ENCODE measurements at regions of chr7 and their contacts with region 1.

Region 1: GRCh38 chr7:140810830-140811556 is 113.7 kb downstream of the BRAF start:
- DNase-seq: peak; percentile 10
- H3K4me3 ChIP-seq: no peak overlapping the region
- CTCF ChIP-seq: peak; percentile 59

Region 2: DNA sequence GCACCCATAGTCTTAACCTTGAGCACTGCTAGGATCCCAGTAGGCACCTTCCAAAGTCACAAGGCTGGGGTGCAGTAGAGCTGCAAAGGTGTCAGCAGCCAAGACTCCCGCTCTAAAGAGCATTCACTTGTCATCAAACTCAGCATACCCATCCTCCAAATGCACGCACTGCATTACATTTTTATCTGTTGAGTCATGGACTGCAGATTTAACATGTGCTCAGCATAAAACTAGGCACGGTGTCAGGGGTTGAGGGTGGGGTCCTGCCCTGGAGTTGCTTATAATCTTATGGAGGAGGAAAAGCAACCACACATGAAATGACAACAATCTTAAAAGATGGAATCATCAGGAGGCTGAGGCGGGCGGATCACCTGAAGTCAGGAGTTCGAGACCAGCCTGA is 850.8 kb before region 1 on chr7:
- CTCF ChIA-PET with region 1: no interaction called
- POLR2A ChIA-PET with region 1: no interaction called
- DNase-seq: no peak
- H3K4me3 ChIP-seq: no peak overlapping the region
- CTCF ChIP-seq: no peak

Region 3: GRCh38 chr7:140738280-140738679 is 72.7 kb before region 1 on chr7:
- CTCF ChIA-PET with region 1: no interaction called
- POLR2A ChIA-PET with region 1: no interaction called
- DNase-seq: peak; percentile 28
- H3K4me3 ChIP-seq: no peak overlapping the region
- CTCF ChIP-seq: no peak

Region 4: DNA sequence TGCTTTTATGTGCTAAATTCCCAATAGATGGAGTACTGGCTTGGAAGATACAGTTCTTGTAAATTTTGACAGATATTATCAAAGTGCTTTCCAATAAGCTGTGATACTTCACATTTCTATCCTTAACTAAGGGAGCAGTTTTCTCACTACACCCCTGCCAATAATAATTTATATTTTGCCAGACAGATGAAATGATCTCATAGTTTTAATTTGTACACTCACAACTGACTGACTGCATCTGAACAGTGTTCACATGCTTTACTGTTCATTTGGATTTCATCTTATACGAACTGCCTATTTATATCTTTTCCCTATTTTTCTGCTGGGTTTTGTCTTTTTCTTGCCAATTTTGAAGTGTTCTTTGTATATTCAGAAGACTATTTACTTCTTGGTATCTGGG is 17.7 kb after region 1 on chr7:
- CTCF ChIA-PET with region 1: interaction called, 18 read pairs
- POLR2A ChIA-PET with region 1: no interaction called
- DNase-seq: no peak
- H3K4me3 ChIP-seq: no peak overlapping the region
- CTCF ChIP-seq: no peak

Region 5: GRCh38 chr7:140857048-140857447 is 46.1 kb after region 1 on chr7:
- CTCF ChIA-PET with region 1: interaction called, 11 read pairs
- POLR2A ChIA-PET with region 1: no interaction called
- DNase-seq: no peak
- H3K4me3 ChIP-seq: no peak overlapping the region
- CTCF ChIP-seq: no peak

Region 6: GRCh38 chr7:140924019-140924820 is 113.2 kb after region 1 on chr7:
- CTCF ChIA-PET with region 1: interaction called, 16 read pairs
- POLR2A ChIA-PET with region 1: no interaction called
- DNase-seq: no peak
- H3K4me3 ChIP-seq: peak overlapping the region; percentile 82
- CTCF ChIP-seq: peak; percentile 61

Region 7: DNA sequence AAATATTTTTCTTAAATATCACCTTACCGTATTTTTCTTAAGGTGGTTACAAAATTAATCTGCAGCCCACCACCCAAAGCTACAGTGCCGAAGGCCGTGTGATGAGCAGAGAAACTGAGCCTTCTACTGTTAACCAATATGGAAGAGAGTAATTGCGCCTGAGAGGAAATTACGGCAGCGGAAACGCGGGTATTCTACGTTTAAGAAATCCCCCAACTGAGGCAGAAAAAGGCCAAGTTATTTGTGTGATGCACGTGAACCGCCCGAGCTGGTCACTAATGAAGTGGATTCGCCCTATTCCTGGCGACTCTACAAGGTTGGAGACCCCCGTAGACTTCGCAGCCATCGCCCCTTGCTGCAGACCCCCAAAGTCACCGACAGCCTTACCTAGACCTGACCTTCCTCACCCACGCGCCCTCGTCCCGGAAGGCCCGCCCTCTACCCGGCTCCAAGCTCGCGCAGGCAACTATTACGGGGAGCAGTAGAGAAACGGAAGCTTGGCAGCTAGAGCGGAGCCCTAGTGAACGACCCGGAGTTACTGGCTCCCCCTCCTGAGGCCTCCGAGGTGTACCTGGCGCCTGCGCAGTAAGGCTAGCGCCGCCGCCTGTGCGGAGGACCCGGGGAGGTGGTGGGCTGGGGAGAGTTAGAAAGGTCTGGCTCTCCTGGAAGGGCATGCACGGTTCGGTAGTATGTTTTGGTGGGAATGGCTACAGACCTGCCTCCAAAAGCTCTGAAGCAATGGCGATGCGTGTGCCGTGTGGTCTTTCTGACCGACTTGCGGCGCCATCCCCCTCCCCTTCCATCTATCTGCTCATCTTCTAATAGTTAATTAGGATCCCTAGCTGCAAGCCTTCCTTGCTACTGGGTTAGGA is 203.8 kb after region 1 on chr7 and contains the start of gene MRPS33:
- CTCF ChIA-PET with region 1: interaction called, 124 read pairs
- POLR2A ChIA-PET with region 1: no interaction called
- DNase-seq: peak; percentile 79
- H3K4me3 ChIP-seq: peak within 1 kb of the TSS; percentile 85
- CTCF ChIP-seq: peak; percentile 87

Region 8: GRCh38 chr7:141533149-141533949 is 722.4 kb after region 1 on chr7:
- CTCF ChIA-PET with region 1: interaction called, 27 read pairs
- POLR2A ChIA-PET with region 1: no interaction called
- DNase-seq: peak; percentile 24
- H3K4me3 ChIP-seq: no peak overlapping the region
- CTCF ChIP-seq: peak; percentile 87

Region 9: GRCh38 chr7:141654551-141654950 is 843.6 kb after region 1 on chr7:
- CTCF ChIA-PET with region 1: interaction called, 30 read pairs
- POLR2A ChIA-PET with region 1: no interaction called
- DNase-seq: peak; percentile 16
- H3K4me3 ChIP-seq: no peak overlapping the region
- CTCF ChIP-seq: peak; percentile 78